Activated CD8-positive, alpha-beta memory T cell treated with anti-CD3 and anti-CD28 coated beads, Interleukin-2, amount 10 ng/mL, durations not matched to agents 7 days and 5 days (primary cell): ENCODE measurements at regions of chr17 and their contacts with region 1.

Region 1: GRCh38 chr17:30104575-30105339 is 11.9 kb upstream of the NSRP1 start:
- DNase-seq: peak; percentile 84
- ATAC-seq: peak; percentile 94
- H3K4me3 Mint-ChIP-seq: peak overlapping the region; percentile 75
- H3K27ac Mint-ChIP-seq: peak overlapping the region; percentile 3
- H3K4me1 Mint-ChIP-seq: peaks cover 8% of the 10 kb centered on the region
- H3K27me3 Mint-ChIP-seq: peaks cover 26% of the 10 kb centered on the region

Region 2: DNA sequence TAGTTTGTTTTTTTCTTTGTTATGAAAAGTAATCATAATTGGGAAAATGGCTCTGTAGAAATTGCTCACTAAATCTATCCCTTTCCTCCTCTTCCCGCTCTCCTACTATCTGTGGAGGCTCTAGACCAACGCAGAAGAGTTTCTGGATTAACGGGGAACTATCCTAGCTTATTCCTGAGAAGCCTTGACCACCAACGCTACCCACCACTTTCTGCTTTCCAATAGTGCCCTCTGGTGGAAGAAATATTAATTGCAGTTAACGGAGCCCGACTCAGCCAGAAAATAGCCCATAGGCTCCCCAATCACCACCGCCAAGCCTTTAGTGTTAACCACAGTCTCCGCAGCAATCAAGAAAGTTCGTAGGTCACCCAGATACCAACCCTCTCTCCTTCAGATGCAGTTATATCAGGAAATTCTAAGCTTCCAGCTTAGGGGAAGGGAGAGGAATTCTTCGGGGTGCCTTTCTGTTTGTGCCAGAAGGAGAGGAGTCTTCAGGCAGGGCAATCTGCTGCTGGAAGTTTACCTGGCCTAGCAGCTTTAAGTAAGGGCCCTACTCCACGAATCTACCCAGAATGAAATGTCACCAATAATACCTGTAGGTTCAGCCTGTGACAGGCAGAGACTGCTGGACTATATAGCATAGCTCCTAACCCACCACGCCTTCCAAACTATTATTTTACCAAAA is 11.2 kb before region 1 on chr17:
- CTCF ChIA-PET with region 1: interaction called, 89 read pairs
- DNase-seq: peak; percentile 62
- ATAC-seq: peak; percentile 72
- H3K4me3 Mint-ChIP-seq: no peak overlapping the region
- H3K27ac Mint-ChIP-seq: no peak overlapping the region
- H3K4me1 Mint-ChIP-seq: peaks cover 7% of the 10 kb centered on the region
- H3K27me3 Mint-ChIP-seq: peaks cover 42% of the 10 kb centered on the region

Region 3: GRCh38 chr17:30124273-30124796 is 19.6 kb after region 1 on chr17:
- CTCF ChIA-PET with region 1: interaction called, 44 read pairs
- DNase-seq: no peak
- ATAC-seq: no peak
- H3K4me3 Mint-ChIP-seq: no peak overlapping the region
- H3K27ac Mint-ChIP-seq: no peak overlapping the region
- H3K4me1 Mint-ChIP-seq: peaks cover 34% of the 10 kb centered on the region
- H3K27me3 Mint-ChIP-seq: no peaks in the 10 kb centered on the region

Region 4: GRCh38 chr17:30267625-30268024 is 162.9 kb after region 1 on chr17:
- CTCF ChIA-PET with region 1: interaction called, 12 read pairs
- DNase-seq: no peak
- ATAC-seq: no peak
- H3K4me3 Mint-ChIP-seq: no peak overlapping the region
- H3K27ac Mint-ChIP-seq: no peak overlapping the region
- H3K4me1 Mint-ChIP-seq: no peaks in the 10 kb centered on the region
- H3K27me3 Mint-ChIP-seq: no peaks in the 10 kb centered on the region

Region 5: DNA sequence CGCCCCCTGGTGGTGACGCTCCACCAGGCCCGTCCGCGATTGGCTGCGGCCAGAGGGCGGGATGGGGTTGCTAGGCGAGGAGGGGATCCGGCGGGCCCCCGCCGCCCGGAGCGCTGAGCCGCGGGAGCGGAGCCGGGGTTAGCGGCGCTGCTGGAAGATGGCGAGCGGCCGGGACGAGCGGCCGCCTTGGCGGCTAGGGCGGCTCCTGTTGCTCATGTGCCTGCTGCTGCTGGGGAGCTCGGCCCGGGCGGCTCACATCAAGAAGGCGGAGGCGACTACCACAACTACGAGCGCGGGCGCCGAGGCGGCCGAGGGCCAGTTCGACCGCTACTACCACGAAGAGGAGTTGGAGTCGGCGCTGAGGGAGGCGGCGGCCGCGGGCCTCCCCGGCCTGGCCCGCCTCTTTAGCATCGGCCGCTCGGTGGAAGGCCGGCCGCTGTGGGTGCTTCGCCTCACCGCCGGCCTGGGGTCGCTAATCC is 274.1 kb after region 1 on chr17 and contains the start of gene CPD:
- CTCF ChIA-PET with region 1: interaction called, 17 read pairs
- DNase-seq: peak; percentile 97
- ATAC-seq: peak; percentile 89
- H3K4me3 Mint-ChIP-seq: peak within 1 kb of the TSS; percentile 84
- H3K27ac Mint-ChIP-seq: peak within 1 kb of the TSS; percentile 82
- H3K4me1 Mint-ChIP-seq: peaks cover 54% of the 10 kb centered on the region
- H3K27me3 Mint-ChIP-seq: peaks cover 4% of the 10 kb centered on the region
- total RNA-seq, gene CPD: 19.9 to 25.6 TPM